ENCODE measurements at regions of chr20 and their contacts with region 1.

Region 1: GRCh38 chr20:48620519-48621254 is 207.1 kb downstream of the PREX1 start:
- DNase-seq: peak; percentile 88
- CTCF ChIP-seq: peak; percentile 94

Region 2: GRCh38 chr20:47704755-47705493 is 915.8 kb before region 1 on chr20:
- in situ Hi-C with region 1: loop called (anchors 25 kb)
- DNase-seq: no peak
- CTCF ChIP-seq: no peak

Region 3: GRCh38 chr20:47785854-47786764 is 834.6 kb before region 1 on chr20:
- in situ Hi-C with region 1: loop called (anchors 25 kb)
- DNase-seq: peak; percentile 77
- CTCF ChIP-seq: peak; percentile 54

Region 4: GRCh38 chr20:48538420-48539203 is 82.1 kb before region 1 on chr20:
- in situ Hi-C with region 1: no loop called
- DNase-seq: no peak
- CTCF ChIP-seq: no peak